ENCODE measurements at regions of chr2 and their contacts with region 1.

Region 1: DNA sequence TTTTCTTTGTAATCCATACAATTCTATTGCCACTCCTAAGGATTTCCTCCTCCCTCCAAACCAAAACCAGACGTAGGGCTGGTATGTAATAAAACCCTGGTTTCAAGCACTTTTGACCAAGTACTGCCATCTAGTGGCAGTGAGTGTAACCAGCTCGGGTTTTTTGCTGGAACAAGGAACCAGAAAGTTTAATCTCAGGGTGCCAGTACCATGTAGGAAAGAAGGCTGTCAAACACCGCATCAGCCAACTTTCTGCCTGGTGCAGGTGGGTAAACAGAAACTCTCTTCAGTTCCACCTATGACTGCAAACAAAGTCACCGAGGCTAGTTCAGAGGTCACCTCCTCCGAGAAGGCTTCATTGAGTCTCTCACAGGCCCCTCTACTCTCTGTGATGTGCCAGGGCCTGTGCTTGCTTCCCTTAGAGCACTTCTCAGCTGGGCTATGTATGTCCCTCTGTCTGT is 10.2 kb upstream of the THNSL2 start:
- DNase-seq: peak; percentile 69
- H3K4me3 Mint-ChIP-seq: no peak overlapping the region
- H3K27ac Mint-ChIP-seq: no peak overlapping the region
- H3K4me1 Mint-ChIP-seq: no peaks in the 10 kb centered on the region
- H3K27me3 Mint-ChIP-seq: no peaks in the 10 kb centered on the region

Region 2: DNA sequence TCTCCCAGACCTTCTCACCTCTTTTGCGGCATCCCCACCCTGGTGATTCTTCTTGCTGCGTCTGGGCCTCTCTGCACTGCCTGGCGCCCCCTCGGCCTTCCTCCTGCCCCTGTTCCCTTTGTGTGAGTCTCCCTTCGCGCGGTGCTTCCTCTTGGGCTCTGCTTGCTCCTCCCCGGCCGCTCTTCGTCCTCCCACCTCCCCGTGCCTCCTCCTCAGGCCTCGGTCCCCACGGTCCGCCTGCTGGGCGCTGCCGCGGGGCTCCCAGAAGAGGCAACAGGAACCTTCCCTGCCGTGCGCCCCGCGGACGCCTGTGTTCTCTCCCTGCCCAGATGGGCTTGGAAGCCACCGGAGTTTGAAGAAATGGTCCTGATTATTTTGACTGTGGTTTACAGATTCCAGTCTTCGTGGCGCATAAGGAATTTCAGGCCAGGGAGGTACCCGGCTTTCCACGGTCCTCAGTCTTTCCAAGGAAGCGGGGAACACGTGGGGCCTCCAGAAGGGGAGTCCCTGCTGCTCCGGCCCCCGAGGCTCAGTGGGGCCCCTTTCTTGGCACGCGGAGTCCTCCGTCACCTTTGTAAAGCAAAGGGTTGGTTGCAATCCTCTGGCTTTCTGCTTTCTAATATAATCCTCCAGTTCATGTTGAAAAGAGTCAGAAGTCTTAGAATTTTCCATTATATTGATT is 156.8 kb before region 1 on chr2:
- CTCF ChIA-PET with region 1: interaction called, 9 read pairs
- intact Hi-C with region 1: loop called (anchors 2 kb)
- DNase-seq: no peak
- H3K4me3 Mint-ChIP-seq: no peak overlapping the region
- H3K27ac Mint-ChIP-seq: no peak overlapping the region
- H3K4me1 Mint-ChIP-seq: peaks cover 6% of the 10 kb centered on the region
- H3K27me3 Mint-ChIP-seq: no peaks in the 10 kb centered on the region

Region 3: DNA sequence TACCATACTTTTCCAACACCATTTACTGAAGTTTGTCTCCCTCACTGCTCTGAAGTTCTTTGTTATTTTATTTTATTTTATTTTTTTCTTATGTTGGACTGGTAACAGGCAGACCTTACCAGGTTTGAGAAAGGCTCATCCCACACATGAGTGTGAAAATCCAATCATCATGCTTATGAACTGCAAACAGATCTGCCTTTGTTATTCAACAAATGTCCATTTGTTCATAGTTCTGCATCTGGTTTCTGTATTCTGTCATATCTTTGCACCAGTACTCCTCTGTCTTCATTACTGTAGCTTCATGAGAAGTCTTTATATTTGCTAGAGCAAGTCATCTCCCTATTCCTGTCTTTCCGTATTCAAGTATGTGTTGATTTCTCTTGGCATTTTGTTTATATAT is 149.0 kb before region 1 on chr2:
- CTCF ChIA-PET with region 1: interaction called, 3 read pairs
- intact Hi-C with region 1: loop called (anchors 1 kb)
- DNase-seq: no peak
- H3K4me3 Mint-ChIP-seq: no peak overlapping the region
- H3K27ac Mint-ChIP-seq: no peak overlapping the region
- H3K4me1 Mint-ChIP-seq: peaks cover 6% of the 10 kb centered on the region
- H3K27me3 Mint-ChIP-seq: no peaks in the 10 kb centered on the region

Region 4: DNA sequence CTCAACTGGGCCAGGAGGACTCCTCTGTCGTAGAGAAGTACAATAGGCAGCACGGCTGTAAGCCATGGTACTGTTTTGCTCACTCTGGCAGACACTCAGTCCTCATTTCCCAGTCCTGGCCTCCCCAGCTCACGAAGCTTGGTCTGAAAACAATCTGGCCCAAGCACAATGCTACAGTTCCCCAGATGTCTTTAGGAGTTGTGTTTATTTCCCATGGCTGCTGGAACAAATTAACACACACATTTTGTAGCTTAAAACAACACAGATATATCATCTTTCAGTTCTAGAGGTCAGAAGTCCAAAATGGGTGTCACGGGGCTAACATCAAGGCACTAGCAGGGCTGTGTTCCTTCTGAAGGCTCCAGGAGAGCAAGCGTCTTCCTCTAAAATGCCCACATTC is 45.1 kb before region 1 on chr2:
- CTCF ChIA-PET with region 1: no interaction called
- intact Hi-C with region 1: no loop called
- DNase-seq: no peak
- H3K4me3 Mint-ChIP-seq: no peak overlapping the region
- H3K27ac Mint-ChIP-seq: no peak overlapping the region
- H3K4me1 Mint-ChIP-seq: no peaks in the 10 kb centered on the region
- H3K27me3 Mint-ChIP-seq: no peaks in the 10 kb centered on the region

Region 5: DNA sequence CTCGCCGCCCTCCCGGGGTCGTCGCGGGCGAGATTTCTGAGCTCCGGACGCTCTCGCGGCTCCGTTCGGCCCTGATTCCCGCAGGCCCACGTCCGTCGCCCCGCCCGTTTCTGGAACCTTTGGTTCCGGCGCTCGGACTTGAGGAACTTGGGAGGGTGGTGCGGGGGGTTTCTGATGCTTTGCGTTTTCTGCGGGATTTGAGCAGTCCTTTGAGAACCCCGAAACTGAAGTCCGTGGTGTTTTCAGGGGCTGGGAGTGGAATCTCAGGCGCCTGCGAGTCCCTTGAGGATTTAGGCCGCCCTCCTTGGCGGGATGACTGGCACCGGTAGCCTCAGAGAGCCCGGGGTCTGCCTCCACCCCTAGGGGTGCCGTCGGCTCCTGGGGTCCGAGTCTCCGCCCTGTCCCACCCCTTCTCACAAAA is 10.5 kb after region 1 on chr2:
- CTCF ChIA-PET with region 1: interaction called, 19 read pairs
- intact Hi-C with region 1: no loop called
- DNase-seq: no peak
- H3K4me3 Mint-ChIP-seq: peak overlapping the region; percentile 56
- H3K27ac Mint-ChIP-seq: no peak overlapping the region
- H3K4me1 Mint-ChIP-seq: peaks cover 2% of the 10 kb centered on the region
- H3K27me3 Mint-ChIP-seq: peaks cover 8% of the 10 kb centered on the region

Region 6: DNA sequence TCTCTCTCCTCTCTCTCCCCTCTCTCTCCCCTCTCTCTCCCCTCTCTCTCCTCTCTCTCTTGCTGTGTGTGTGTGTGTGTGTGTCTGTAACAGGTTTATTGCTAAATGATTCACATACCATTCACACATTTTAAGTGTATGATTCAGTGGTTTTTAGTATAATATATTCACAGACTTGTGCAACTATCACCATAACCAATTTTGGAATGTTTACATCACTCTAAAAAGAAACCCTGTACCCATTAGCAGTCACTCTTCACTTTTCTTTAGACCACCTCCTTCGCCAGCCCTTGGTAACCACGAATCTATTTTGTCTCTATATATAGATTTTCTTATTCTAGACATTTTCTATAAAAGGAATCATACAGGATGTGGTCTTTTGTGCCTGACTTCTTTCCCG is 21.5 kb after region 1 on chr2:
- CTCF ChIA-PET with region 1: interaction called, 5 read pairs
- intact Hi-C with region 1: loop called (anchors 1 kb)
- DNase-seq: peak; percentile 45
- H3K4me3 Mint-ChIP-seq: peak overlapping the region; percentile 6
- H3K27ac Mint-ChIP-seq: peak overlapping the region; percentile 84
- H3K4me1 Mint-ChIP-seq: peaks cover 18% of the 10 kb centered on the region
- H3K27me3 Mint-ChIP-seq: peaks cover 2% of the 10 kb centered on the region

Region 7: GRCh38 chr2:88191722-88192042 is 31.7 kb after region 1 on chr2:
- CTCF ChIA-PET with region 1: no interaction called
- intact Hi-C with region 1: no loop called
- DNase-seq: no peak
- H3K4me3 Mint-ChIP-seq: no peak overlapping the region
- H3K27ac Mint-ChIP-seq: no peak overlapping the region
- H3K4me1 Mint-ChIP-seq: peaks cover 10% of the 10 kb centered on the region
- H3K27me3 Mint-ChIP-seq: peaks cover 16% of the 10 kb centered on the region

Region 8: DNA sequence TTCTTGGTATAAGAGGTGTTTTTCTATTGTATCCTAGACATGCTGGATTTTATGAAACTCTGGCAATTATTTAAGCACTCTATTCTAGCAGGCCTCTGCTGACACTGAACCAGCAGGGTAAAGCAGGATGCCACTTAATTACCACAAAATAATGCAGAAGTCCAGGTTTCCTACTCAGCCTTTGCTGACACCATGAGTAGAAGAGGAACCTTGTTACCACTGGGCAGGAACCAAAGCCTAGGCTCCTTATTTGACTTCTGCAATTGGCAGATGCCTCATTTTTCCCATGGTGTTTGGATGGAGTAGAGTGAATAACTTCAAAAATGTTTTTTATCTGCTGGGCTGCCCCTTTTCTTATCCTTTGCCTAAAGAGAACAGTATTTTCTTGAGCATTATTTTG is 70.9 kb after region 1 on chr2:
- CTCF ChIA-PET with region 1: no interaction called
- intact Hi-C with region 1: no loop called
- DNase-seq: no peak
- H3K4me3 Mint-ChIP-seq: no peak overlapping the region
- H3K27ac Mint-ChIP-seq: no peak overlapping the region
- H3K4me1 Mint-ChIP-seq: no peaks in the 10 kb centered on the region
- H3K27me3 Mint-ChIP-seq: peaks cover 4% of the 10 kb centered on the region

Measured in activated naive CD4-positive, alpha-beta T cell treated with anti-CD3 and anti-CD28 coated beads for 36 hours (primary cell).